Naive thymus-derived CD4-positive, alpha-beta T cell (primary cell): ENCODE measurements at regions of chr6 and their contacts with region 1.

Region 1: GRCh38 chr6:42043787-42044475 is 6.4 kb upstream of the TAF8 start:
- DNase-seq: peak; percentile 85 to 95 (median 91)
- ATAC-seq: peak; percentile 67
- H3K4me3 ChIP-seq: peak overlapping the region; percentile 59
- H3K4me3 Mint-ChIP-seq: peak overlapping the region; percentile 84 to 99 (median 95)
- H3K27ac ChIP-seq: peak overlapping the region; percentile 76
- H3K27ac Mint-ChIP-seq: peak overlapping the region; percentile 73 to 98 (median 94)
- H3K4me1 ChIP-seq: peaks cover 55 to 64% of the 10 kb centered on the region in 2 donors
- H3K4me1 Mint-ChIP-seq: peaks cover 53 to 89% (median 64%) of the 10 kb centered on the region in 7 donors
- H3K27me3 ChIP-seq: no peaks in the 10 kb centered on the region
- H3K27me3 Mint-ChIP-seq: no peaks in the 10 kb centered on the region

Region 2: GRCh38 chr6:41652877-41653644 is 390.9 kb before region 1 on chr6:
- CTCF ChIA-PET with region 1: no interaction called
- POLR2A ChIA-PET with region 1: no interaction called
- intact Hi-C with region 1: no loop called
- DNase-seq: no peak
- ATAC-seq: no peak
- H3K4me3 ChIP-seq: no peak overlapping the region
- H3K4me3 Mint-ChIP-seq: no peak overlapping the region
- H3K27ac ChIP-seq: no peak overlapping the region
- H3K27ac Mint-ChIP-seq: no peak overlapping the region
- H3K4me1 ChIP-seq: no peaks in the 10 kb centered on the region
- H3K4me1 Mint-ChIP-seq: no peaks in the 10 kb centered on the region
- H3K27me3 ChIP-seq: no peaks in the 10 kb centered on the region
- H3K27me3 Mint-ChIP-seq: peaks cover 5 to 30% (median 12%) of the 10 kb centered on the region in 5 donors

Region 3: GRCh38 chr6:41735427-41736356 is 308.2 kb before region 1 on chr6 and contains the start of gene TFEB:
- CTCF ChIA-PET with region 1: no interaction called
- POLR2A ChIA-PET with region 1: interaction called, 3 read pairs
- intact Hi-C with region 1: loop called in 1 of 2 experiments (anchors 2 kb)
- DNase-seq: peak; percentile 88 to 98 (median 93)
- ATAC-seq: peak; percentile 87
- H3K4me3 ChIP-seq: peak within 1 kb of the TSS; percentile 57
- H3K4me3 Mint-ChIP-seq: peak within 1 kb of the TSS; percentile 66 to 89 (median 80)
- H3K27ac ChIP-seq: peak within 1 kb of the TSS; percentile 80
- H3K27ac Mint-ChIP-seq: peak within 1 kb of the TSS in 8 of 9 donors; percentile 34 to 84 (median 62)
- H3K4me1 ChIP-seq: peaks cover 32 to 37% of the 10 kb centered on the region in 2 donors
- H3K4me1 Mint-ChIP-seq: peaks cover 13 to 32% (median 24%) of the 10 kb centered on the region in 7 donors
- H3K27me3 ChIP-seq: no peaks in the 10 kb centered on the region
- H3K27me3 Mint-ChIP-seq: no peaks in the 10 kb centered on the region
- total RNA-seq, gene TFEB: 7.4 to 39.9 (median 11.8) TPM

Region 4: DNA sequence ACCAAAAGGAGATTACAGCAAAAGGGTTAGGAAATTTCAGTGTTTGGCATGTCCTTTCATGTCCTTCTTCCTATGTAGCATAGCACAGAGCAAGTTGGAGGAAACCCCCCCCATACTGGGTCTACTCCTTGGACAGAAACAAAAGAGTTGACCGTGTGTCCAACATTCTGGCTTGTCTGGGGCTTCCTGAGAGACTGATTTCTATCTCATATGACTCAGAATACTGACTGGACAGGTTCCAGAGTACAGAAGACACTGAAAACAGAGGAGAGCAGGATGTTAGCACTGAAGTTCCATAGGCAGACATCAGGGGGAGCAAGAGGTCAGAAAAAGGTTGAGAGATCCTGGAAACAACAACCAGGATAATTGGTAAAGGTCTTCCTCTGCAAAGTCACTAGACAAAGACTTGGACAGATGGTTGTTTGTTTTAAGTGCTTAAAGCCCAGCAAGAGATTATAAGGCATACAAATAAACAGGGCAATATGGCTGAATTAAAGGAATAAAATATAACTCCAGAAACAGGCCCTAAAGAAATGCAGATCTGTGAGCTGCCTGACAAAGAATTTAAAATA is 197.2 kb before region 1 on chr6:
- CTCF ChIA-PET with region 1: interaction called, 15 read pairs
- POLR2A ChIA-PET with region 1: interaction called, 4 read pairs
- intact Hi-C with region 1: loop called (anchors 1 kb)
- DNase-seq: peak; percentile 8 to 63 (median 54)
- ATAC-seq: peak; percentile 80
- H3K4me3 ChIP-seq: no peak overlapping the region
- H3K4me3 Mint-ChIP-seq: no peak overlapping the region
- H3K27ac ChIP-seq: no peak overlapping the region
- H3K27ac Mint-ChIP-seq: peak overlapping the region in 4 of 9 donors; percentile 4 to 68 (median 32)
- H3K4me1 ChIP-seq: no peaks in the 10 kb centered on the region
- H3K4me1 Mint-ChIP-seq: peaks cover 4 to 13% (median 6%) of the 10 kb centered on the region in 7 donors
- H3K27me3 ChIP-seq: no peaks in the 10 kb centered on the region
- H3K27me3 Mint-ChIP-seq: no peaks in the 10 kb centered on the region

Region 5: DNA sequence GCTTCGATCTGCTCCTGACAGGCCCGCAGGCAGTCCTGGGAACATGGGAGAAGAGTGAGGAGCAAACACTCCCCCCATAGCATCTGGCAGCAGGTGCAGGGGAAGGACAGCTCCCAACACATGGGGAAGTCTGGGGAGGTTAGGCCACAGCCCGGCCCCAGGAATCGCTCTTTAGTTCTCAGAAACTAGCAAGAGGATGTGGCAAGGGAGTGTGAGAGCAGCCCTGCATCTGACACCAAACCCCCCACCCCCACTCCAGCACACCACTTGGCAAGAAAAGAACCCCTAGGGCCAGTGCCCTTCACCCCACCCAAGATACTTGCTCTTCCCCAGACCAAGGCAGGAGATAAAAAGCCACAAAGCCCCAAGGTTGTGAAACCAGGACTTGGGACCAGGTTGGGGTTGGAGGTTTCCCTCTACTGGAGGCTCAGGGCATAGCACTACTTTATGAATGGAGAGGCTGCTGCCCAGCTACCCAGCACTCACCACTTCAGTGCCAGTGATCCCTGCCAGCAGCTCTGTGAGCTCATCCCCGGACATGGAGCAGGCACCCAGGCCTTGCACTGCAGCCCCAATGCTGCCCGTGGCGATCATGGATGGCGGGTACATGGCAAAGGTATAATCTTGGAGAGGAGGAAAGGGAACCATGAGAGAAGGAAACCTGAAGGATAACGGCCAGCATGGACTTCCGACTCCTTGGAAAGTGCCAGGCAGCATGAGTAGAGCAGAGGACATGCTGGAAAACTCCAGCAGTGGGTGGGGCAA is 107.7 kb before region 1 on chr6:
- CTCF ChIA-PET with region 1: interaction called, 32 read pairs
- POLR2A ChIA-PET with region 1: interaction called, 180 read pairs
- intact Hi-C with region 1: loop called (anchors 1 kb)
- DNase-seq: peak in 8 of 9 donors; percentile 52 to 72 (median 63)
- ATAC-seq: peak; percentile 79
- H3K4me3 ChIP-seq: peak overlapping the region; percentile 34
- H3K4me3 Mint-ChIP-seq: peak overlapping the region; percentile 64 to 100 (median 90)
- H3K27ac ChIP-seq: peak overlapping the region; percentile 76
- H3K27ac Mint-ChIP-seq: peak overlapping the region; percentile 85 to 95 (median 90)
- H3K4me1 ChIP-seq: peaks cover 57 to 61% of the 10 kb centered on the region in 2 donors
- H3K4me1 Mint-ChIP-seq: peaks cover 48 to 81% (median 74%) of the 10 kb centered on the region in 7 donors
- H3K27me3 ChIP-seq: no peaks in the 10 kb centered on the region
- H3K27me3 Mint-ChIP-seq: no peaks in the 10 kb centered on the region

Region 6: DNA sequence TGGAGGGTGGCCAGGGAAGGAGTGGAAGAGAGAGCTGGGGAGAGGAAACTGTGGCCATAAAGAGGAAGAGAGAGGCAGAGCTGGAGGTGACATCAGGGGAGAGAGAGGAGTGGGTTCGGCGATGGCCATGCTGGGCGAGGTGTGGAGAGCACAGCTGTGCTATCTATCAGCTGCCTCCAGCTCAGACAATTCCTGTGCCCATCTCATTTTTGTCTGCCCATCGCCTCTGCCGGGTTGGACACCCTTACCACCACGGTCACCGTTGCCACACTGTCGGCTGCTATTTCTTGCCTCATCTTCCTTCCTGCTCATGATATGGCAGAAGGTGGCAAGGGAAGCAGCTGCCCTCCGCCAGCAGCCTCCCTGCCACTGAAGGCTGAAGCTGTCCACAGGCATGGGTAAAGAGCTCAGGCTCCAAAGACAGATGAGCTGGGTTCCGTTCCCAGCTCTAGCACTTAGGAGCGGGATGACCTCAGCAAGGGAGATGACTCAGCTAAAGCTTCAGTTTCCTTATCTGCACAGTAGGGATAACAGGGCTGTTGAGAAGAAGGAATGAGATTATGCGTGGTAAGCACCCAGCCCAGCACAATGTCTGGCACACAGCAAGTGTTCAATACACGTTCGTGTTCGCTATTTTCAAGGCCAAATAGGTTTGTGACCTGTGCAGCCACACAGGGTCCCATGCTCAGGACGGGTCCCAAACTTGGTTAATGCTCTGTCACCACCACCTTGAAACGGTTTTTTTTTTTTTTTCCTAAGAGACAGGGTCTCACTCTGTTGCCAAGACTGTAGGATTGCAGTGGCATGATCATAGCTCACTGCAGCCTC is 15.5 kb before region 1 on chr6:
- CTCF ChIA-PET with region 1: interaction called, 8 read pairs
- POLR2A ChIA-PET with region 1: interaction called, 35 read pairs
- intact Hi-C with region 1: no loop called
- DNase-seq: peak in 1 of 9 donors; percentile 7
- ATAC-seq: peak; percentile 65
- H3K4me3 ChIP-seq: no peak overlapping the region
- H3K4me3 Mint-ChIP-seq: peak overlapping the region; percentile 69 to 88 (median 78)
- H3K27ac ChIP-seq: peak overlapping the region; percentile 56
- H3K27ac Mint-ChIP-seq: peak overlapping the region; percentile 89 to 98 (median 95)
- H3K4me1 ChIP-seq: peaks cover 84 to 91% of the 10 kb centered on the region in 2 donors
- H3K4me1 Mint-ChIP-seq: peaks cover 76 to 100% (median 87%) of the 10 kb centered on the region in 7 donors
- H3K27me3 ChIP-seq: no peaks in the 10 kb centered on the region
- H3K27me3 Mint-ChIP-seq: no peaks in the 10 kb centered on the region

Region 7: GRCh38 chr6:43013843-43014433 is 970.0 kb after region 1 on chr6 and contains the starts of genes KLHDC3 and MEA1:
- CTCF ChIA-PET with region 1: no interaction called
- POLR2A ChIA-PET with region 1: no interaction called
- intact Hi-C with region 1: loop called in 1 of 2 experiments (anchors 5 kb)
- DNase-seq: peak; percentile 83 to 100 (median 99)
- ATAC-seq: peak; percentile 98
- H3K4me3 ChIP-seq: peak within 1 kb of the TSS; percentile 73
- H3K4me3 Mint-ChIP-seq: peak within 1 kb of the TSS; percentile 85 to 99 (median 92)
- H3K27ac ChIP-seq: peak within 1 kb of the TSS; percentile 84
- H3K27ac Mint-ChIP-seq: peak within 1 kb of the TSS; percentile 82 to 97 (median 92)
- H3K4me1 ChIP-seq: peaks cover 20 to 31% of the 10 kb centered on the region in 2 donors
- H3K4me1 Mint-ChIP-seq: peaks cover 45 to 78% (median 58%) of the 10 kb centered on the region in 7 donors
- H3K27me3 ChIP-seq: no peaks in the 10 kb centered on the region
- H3K27me3 Mint-ChIP-seq: peaks cover 0 to 3% (median 0%) of the 10 kb centered on the region in 5 donors
- total RNA-seq, gene KLHDC3: 39.9 to 76.9 (median 67.4) TPM
- total RNA-seq, gene MEA1: 20.3 to 58.0 (median 32.7) TPM